ENCODE measurements at regions of chr21 and their contacts with region 1.

Region 1: GRCh38 chr21:33608559-33608958 is 20.1 kb upstream of the DONSON start:
- DNase-seq: no peak
- H3K4me3 Mint-ChIP-seq: no peak overlapping the region
- H3K27ac Mint-ChIP-seq: no peak overlapping the region
- H3K4me1 Mint-ChIP-seq: no peaks in the 10 kb centered on the region
- H3K27me3 Mint-ChIP-seq: no peaks in the 10 kb centered on the region

Region 2: DNA sequence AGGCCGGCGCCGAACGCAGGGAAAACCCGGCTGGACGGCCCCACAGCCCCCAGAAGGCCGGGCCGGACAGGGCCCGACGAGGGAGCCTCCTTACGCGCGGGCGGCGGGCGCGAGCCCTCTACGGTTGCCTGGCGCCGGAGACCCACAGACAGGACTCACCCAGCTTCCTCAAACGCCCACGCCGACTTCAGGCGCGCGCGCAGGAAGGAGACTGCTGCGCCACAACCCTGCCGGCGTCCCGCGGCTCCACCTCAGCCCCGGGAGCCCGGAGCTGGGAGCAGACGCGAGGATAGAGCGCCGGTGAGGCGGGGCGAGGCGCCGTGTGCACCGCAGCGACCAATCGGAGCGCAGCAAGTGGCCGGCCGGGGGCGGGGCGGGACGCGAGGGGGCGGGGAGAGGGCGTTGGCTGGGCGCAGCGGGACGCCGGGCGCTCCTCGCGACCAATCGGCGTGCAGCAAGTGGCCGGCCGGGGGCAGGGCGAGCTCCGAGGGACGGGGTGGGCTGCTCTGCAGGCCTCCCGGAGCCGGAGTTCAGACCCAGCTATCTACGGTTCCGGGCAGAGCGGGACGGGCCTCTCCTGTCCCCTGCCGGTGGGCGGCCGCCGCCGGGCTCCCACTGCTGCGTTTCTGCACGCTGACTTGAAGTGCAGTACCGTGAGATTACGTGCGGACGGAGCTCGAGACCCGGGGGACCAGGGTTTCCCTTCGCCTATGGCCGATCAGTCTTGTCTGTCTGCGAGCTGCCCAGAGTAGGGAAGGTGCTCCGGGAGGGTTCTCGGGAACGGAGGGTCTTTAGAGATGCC is 128.7 kb before region 1 on chr21 and contains the start of gene TMEM50B:
- CTCF ChIA-PET with region 1: interaction called, 15 read pairs
- POLR2A ChIA-PET with region 1: interaction called, 3 read pairs
- intact Hi-C with region 1: no loop called
- DNase-seq: peak; percentile 99
- H3K4me3 Mint-ChIP-seq: peak within 1 kb of the TSS; percentile 92
- H3K27ac Mint-ChIP-seq: peak within 1 kb of the TSS; percentile 79
- H3K4me1 Mint-ChIP-seq: peaks cover 19% of the 10 kb centered on the region
- H3K27me3 Mint-ChIP-seq: no peaks in the 10 kb centered on the region
- total RNA-seq, gene TMEM50B: 18.6 to 21.8 TPM

Region 3: GRCh38 chr21:33537212-33537611 is 71.3 kb before region 1 on chr21:
- CTCF ChIA-PET with region 1: interaction called, 15 read pairs
- POLR2A ChIA-PET with region 1: no interaction called
- intact Hi-C with region 1: loop called (anchors 5 kb)
- DNase-seq: no peak
- H3K4me3 Mint-ChIP-seq: no peak overlapping the region
- H3K27ac Mint-ChIP-seq: no peak overlapping the region
- H3K4me1 Mint-ChIP-seq: peaks cover 12% of the 10 kb centered on the region
- H3K27me3 Mint-ChIP-seq: no peaks in the 10 kb centered on the region

Region 4: GRCh38 chr21:33572350-33572749 is 36.2 kb before region 1 on chr21:
- CTCF ChIA-PET with region 1: interaction called, 24 read pairs
- POLR2A ChIA-PET with region 1: no interaction called
- intact Hi-C with region 1: no loop called
- DNase-seq: no peak
- H3K4me3 Mint-ChIP-seq: no peak overlapping the region
- H3K27ac Mint-ChIP-seq: peak overlapping the region; percentile 73
- H3K4me1 Mint-ChIP-seq: peaks cover 24% of the 10 kb centered on the region
- H3K27me3 Mint-ChIP-seq: no peaks in the 10 kb centered on the region

Region 5: DNA sequence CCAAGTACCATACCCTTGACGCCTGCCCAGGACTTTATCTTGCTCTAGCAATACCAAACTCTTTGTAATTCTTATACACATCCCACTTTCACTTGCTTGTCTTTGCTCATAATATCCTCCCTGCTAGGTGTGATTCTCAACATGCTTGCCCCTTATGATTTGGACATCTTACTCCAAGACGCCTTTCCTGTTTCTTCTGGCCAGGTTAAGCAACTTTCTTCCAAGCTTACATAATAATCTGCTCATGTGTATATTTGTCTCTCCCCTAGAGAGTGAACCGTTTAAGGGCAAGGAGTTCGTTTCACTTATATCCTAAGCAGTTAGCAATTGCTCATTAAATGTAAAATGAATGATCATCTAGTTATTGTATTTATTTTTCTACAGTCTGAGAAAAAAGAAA is 11.2 kb after region 1 on chr21:
- CTCF ChIA-PET with region 1: interaction called, 17 read pairs
- POLR2A ChIA-PET with region 1: no interaction called
- intact Hi-C with region 1: no loop called
- DNase-seq: no peak
- H3K4me3 Mint-ChIP-seq: no peak overlapping the region
- H3K27ac Mint-ChIP-seq: no peak overlapping the region
- H3K4me1 Mint-ChIP-seq: no peaks in the 10 kb centered on the region
- H3K27me3 Mint-ChIP-seq: no peaks in the 10 kb centered on the region